GM12878 (cell line): ENCODE measurements at regions of chr6 and their contacts with region 1.

Region 1: DNA sequence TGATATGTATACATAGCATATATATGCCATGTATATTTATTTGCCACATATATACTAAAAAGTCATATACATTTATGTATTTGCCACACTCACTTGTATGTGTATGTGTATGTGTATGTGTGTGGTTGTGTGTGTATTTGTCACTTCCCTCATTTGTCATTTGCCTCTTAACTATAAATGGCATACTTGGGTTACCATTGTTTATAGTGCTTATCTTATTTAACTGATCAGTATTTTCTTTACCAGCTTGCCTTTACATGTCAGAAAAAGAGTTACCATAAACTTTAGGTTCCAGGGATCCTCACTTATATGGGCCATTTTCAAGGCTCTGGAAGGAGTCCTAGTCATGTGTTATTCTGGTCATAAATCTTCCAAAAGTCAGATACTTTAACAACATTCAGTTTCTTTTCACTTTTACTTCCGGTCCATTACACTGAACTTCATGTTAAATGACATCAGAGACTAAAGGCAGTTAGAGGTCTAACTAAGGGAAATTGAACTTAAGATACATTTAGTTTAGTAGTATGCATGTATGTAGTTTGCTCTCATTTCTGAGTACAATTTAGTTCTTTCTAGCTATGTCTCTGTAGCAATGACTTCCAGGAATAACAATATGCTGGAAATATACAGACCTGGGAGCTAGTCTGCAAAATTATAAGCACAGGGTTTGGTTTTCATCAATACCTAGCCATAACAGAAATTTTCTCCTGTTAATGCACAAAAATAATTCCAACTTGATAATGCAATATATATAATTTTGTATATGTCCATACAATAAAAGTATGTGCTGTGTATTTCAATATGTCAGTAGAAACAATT is 33.7 kb upstream of the HIVEP1 start:
- DNase-seq: peak; percentile 20
- ATAC-seq: peak; percentile 66
- H3K4me3 ChIP-seq: no peak overlapping the region
- H3K27ac ChIP-seq: peak overlapping the region; percentile 58; the same call in 1 of the 2 replicates
- H3K4me1 ChIP-seq: peaks cover 15% of the 10 kb centered on the region
- H3K27me3 ChIP-seq: no peaks in the 10 kb centered on the region
- CTCF ChIP-seq: no peak
- EP300 ChIP-seq: no peak
- POLR2A ChIP-seq: no peak
- RAD21 ChIP-seq: no peak

Region 2: DNA sequence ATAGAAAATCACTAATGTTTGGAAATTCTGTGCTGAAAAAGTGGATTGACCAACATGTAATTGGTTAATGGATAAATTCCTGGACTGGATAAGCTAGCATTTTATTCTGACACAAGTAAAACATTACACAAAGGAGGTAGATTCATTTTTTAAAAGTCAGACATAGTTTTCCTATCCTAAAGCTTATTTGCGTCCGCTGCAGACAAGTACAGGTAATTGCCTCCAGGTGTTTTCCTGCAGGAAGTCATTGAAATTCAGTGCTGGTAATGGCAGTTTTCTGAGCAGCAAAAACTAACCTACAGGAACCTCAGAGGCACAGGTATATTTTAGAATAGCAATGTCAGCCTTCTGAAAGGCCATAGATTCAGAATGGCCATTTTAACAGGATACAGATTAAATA is 13.7 kb after region 1 on chr6:
- CTCF ChIA-PET with region 1: interaction called, 4 read pairs
- POLR2A ChIA-PET with region 1: interaction called, 3 read pairs
- RAD21 ChIA-PET with region 1: no interaction called
- SMC1A ChIA-PET with region 1: interaction called, 24 read pairs
- in situ Hi-C with region 1: no loop called
- intact Hi-C with region 1: no loop called
- DNase-seq: no peak
- ATAC-seq: no peak
- H3K4me3 ChIP-seq: no peak overlapping the region
- H3K27ac ChIP-seq: no peak overlapping the region
- H3K4me1 ChIP-seq: no peaks in the 10 kb centered on the region
- H3K27me3 ChIP-seq: no peaks in the 10 kb centered on the region
- CTCF ChIP-seq: no peak
- EP300 ChIP-seq: no peak
- POLR2A ChIP-seq: no peak
- RAD21 ChIP-seq: no peak